CD8-positive, alpha-beta T cell (primary cell): ENCODE measurements at regions of chr17 and their contacts with region 1.

Region 1: DNA sequence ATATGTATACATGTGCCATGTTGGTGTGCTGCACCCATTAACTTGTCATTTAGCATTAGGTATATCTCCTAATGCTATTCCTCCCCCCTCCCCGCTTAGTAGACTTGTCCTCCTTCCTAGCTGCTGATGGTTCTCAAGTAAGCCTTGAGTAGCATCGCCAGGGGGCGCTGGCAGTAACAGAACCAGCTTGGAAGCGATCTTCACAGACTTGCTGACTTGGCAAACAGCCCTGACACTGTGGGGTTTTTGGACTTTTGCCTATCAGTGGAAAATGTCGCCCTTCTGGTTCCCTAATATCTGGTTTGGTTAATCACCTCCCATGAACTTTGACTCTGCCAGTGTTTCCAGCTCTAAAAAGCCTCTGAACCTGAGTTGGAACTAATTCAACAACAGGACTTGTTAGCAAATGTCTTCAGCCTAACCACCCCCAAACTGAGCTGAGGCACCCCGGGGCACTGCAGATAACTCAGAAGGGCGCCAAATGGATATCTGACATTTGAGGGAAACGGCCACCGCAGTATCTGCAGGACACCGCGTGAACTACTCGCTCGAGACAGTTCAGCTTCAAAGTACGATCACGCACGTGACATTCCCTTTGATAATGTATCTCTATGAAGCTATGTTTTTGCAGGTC is 15.4 kb upstream of the SPATA32 start:
- DNase-seq: peak; percentile 78 to 93 (median 91)
- ATAC-seq: peak; percentile 99
- H3K4me3 ChIP-seq: no peak overlapping the region
- H3K4me3 Mint-ChIP-seq: no peak overlapping the region
- H3K27ac ChIP-seq: no peak overlapping the region
- H3K27ac Mint-ChIP-seq: peak overlapping the region; percentile 41
- H3K4me1 ChIP-seq: no peaks in the 10 kb centered on the region
- H3K4me1 Mint-ChIP-seq: peaks cover 7% of the 10 kb centered on the region
- H3K27me3 ChIP-seq: no peaks in the 10 kb centered on the region
- H3K27me3 Mint-ChIP-seq: no peaks in the 10 kb centered on the region
- CTCF ChIP-seq: peak; percentile 73

Region 2: DNA sequence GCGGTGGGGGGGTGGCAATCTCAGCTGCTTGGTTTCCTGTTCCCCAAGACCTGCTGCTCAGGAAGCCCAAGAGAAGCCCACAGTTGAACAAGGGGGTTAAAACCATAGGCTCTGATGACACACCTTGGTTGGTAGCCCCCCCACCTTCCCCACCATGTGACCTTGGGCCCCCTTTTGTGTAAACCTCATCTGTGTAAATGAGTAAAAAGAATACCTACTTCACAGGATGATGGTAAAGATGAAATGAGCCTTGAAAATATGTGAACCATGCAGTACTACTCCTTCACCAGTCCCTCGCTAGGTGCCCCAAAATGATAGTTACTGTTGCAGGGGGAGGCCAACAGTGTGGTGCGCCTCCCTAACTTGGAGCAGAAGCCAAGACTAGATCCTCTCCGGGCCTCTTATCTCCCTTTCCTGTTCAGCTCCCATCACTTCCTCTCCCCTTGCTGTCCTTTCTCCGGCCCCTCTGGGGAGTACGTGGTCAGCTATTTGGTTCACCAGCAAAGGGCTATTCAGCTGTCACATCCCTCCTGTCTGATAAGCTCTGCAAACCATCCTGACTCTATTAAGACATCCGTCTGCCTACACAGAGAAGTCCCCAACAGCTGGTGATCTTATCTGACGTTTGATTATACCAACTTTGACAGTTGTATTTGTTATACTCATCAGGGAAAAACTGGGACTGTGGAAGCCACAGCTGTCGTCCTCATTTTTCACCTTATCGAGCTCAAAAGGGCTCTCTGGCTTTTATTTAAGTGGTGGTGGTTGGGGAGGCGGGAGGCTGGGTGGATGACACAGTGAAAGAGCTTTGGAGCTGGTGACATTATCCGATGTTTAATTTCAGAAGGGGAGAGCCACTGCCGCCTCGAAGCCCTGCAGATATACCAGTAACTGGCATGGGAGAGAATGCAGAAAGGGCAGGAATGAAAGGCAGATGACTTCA is 245.8 kb before region 1 on chr17:
- CTCF ChIA-PET with region 1: no interaction called
- POLR2A ChIA-PET with region 1: no interaction called
- intact Hi-C with region 1: no loop called
- DNase-seq: no peak
- ATAC-seq: no peak
- H3K4me3 ChIP-seq: no peak overlapping the region
- H3K4me3 Mint-ChIP-seq: no peak overlapping the region
- H3K27ac ChIP-seq: no peak overlapping the region
- H3K27ac Mint-ChIP-seq: no peak overlapping the region
- H3K4me1 ChIP-seq: no peaks in the 10 kb centered on the region
- H3K4me1 Mint-ChIP-seq: peaks cover 2% of the 10 kb centered on the region
- H3K27me3 ChIP-seq: no peaks in the 10 kb centered on the region
- H3K27me3 Mint-ChIP-seq: no peaks in the 10 kb centered on the region
- CTCF ChIP-seq: no peak

Region 3: GRCh38 chr17:45228763-45229539 is 48.4 kb before region 1 on chr17:
- CTCF ChIA-PET with region 1: interaction called, 206 read pairs
- POLR2A ChIA-PET with region 1: interaction called, 3 read pairs
- intact Hi-C with region 1: no loop called
- DNase-seq: peak; percentile 60 to 95 (median 83)
- ATAC-seq: peak; percentile 50
- H3K4me3 ChIP-seq: peak overlapping the region; percentile 84 to 97
- H3K4me3 Mint-ChIP-seq: peak overlapping the region; percentile 100
- H3K27ac ChIP-seq: peak overlapping the region; percentile 97
- H3K27ac Mint-ChIP-seq: peak overlapping the region; percentile 100
- H3K4me1 ChIP-seq: peaks cover 93% of the 10 kb centered on the region
- H3K4me1 Mint-ChIP-seq: peaks cover 82% of the 10 kb centered on the region
- H3K27me3 ChIP-seq: no peaks in the 10 kb centered on the region
- H3K27me3 Mint-ChIP-seq: no peaks in the 10 kb centered on the region
- CTCF ChIP-seq: no peak

Region 4: DNA sequence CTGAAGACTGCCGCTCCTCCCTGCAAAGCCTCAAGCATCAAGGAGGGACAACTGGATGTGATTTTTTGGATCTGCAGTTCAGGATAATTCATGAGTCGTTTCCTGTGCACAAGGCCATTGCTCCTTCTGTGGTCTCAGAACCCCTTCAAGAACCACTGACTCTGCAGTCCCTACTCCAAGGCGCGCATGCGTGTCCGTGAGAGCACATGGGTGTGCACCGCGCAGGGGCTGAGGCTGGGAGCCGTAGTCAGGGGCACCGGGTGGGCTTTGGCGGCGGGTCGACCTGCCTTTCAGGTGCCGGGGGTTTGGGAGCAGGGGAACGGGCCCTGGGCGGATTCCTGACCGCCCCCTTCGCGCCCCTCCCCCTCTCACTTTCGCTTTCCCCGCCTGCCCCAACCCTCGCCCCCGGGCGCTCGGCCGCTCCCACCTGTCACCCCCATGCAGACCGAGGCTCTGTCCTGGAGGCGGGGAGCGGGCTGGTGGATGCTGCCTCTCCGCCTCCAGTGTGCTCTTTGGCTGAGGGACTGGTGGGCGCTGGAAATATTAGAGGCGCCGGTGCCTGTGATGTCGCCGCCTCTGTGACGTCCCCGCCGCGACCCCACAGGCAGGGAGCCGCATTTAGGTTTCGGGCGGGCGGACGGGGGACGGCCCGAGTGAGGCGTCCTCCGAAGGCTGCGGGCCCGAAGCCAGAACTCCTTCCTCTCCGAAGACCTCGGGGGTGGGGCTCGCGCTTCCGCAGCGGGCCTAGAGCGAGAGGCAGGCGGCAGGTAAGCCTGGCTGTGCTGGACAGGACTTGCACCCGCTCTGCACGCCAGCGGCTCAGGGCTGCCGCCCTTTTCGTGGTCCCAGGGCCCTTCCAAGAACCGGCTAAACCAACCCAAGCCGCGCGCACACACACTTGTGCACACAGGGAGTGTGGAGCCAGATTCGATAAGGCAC is 15.5 kb before region 1 on chr17 and contains the start of gene SPATA32:
- CTCF ChIA-PET with region 1: interaction called, 32 read pairs
- POLR2A ChIA-PET with region 1: interaction called, 6 read pairs
- intact Hi-C with region 1: no loop called
- DNase-seq: peak; percentile 37 to 85 (median 75)
- ATAC-seq: peak; percentile 86
- H3K4me3 ChIP-seq: peak within 1 kb of the TSS; percentile 71 to 76
- H3K4me3 Mint-ChIP-seq: peak within 1 kb of the TSS; percentile 83
- H3K27ac ChIP-seq: peak within 1 kb of the TSS; percentile 29 to 74
- H3K27ac Mint-ChIP-seq: peak within 1 kb of the TSS; percentile 87
- H3K4me1 ChIP-seq: peaks cover 32% of the 10 kb centered on the region
- H3K4me1 Mint-ChIP-seq: peaks cover 29% of the 10 kb centered on the region
- H3K27me3 ChIP-seq: no peaks in the 10 kb centered on the region
- H3K27me3 Mint-ChIP-seq: no peaks in the 10 kb centered on the region
- CTCF ChIP-seq: no peak
- total RNA-seq, gene SPATA32: 0.22 TPM in 1 of 2 experiments, not detected in the other

Region 5: GRCh38 chr17:45307290-45308015 is 30.1 kb after region 1 on chr17:
- CTCF ChIA-PET with region 1: interaction called, 104 read pairs
- POLR2A ChIA-PET with region 1: interaction called, 11 read pairs
- intact Hi-C with region 1: no loop called
- DNase-seq: peak in 4 of 9 experiments; percentile 36 to 65 (median 42)
- ATAC-seq: peak; percentile 55
- H3K4me3 ChIP-seq: no peak overlapping the region
- H3K4me3 Mint-ChIP-seq: peak overlapping the region; percentile 42
- H3K27ac ChIP-seq: peak overlapping the region; percentile 32 to 33
- H3K27ac Mint-ChIP-seq: peak overlapping the region; percentile 81
- H3K4me1 ChIP-seq: peaks cover 62% of the 10 kb centered on the region
- H3K4me1 Mint-ChIP-seq: peaks cover 77% of the 10 kb centered on the region
- H3K27me3 ChIP-seq: no peaks in the 10 kb centered on the region
- H3K27me3 Mint-ChIP-seq: no peaks in the 10 kb centered on the region
- CTCF ChIP-seq: no peak

Region 6: GRCh38 chr17:45364531-45365390 is 87.4 kb after region 1 on chr17:
- CTCF ChIA-PET with region 1: interaction called, 13 read pairs
- POLR2A ChIA-PET with region 1: interaction called, 3 read pairs
- intact Hi-C with region 1: no loop called
- DNase-seq: no peak
- ATAC-seq: no peak
- H3K4me3 ChIP-seq: no peak overlapping the region
- H3K4me3 Mint-ChIP-seq: no peak overlapping the region
- H3K27ac ChIP-seq: no peak overlapping the region
- H3K27ac Mint-ChIP-seq: no peak overlapping the region
- H3K4me1 ChIP-seq: no peaks in the 10 kb centered on the region
- H3K4me1 Mint-ChIP-seq: no peaks in the 10 kb centered on the region
- H3K27me3 ChIP-seq: no peaks in the 10 kb centered on the region
- H3K27me3 Mint-ChIP-seq: peaks cover 18% of the 10 kb centered on the region
- CTCF ChIP-seq: no peak

Region 7: DNA sequence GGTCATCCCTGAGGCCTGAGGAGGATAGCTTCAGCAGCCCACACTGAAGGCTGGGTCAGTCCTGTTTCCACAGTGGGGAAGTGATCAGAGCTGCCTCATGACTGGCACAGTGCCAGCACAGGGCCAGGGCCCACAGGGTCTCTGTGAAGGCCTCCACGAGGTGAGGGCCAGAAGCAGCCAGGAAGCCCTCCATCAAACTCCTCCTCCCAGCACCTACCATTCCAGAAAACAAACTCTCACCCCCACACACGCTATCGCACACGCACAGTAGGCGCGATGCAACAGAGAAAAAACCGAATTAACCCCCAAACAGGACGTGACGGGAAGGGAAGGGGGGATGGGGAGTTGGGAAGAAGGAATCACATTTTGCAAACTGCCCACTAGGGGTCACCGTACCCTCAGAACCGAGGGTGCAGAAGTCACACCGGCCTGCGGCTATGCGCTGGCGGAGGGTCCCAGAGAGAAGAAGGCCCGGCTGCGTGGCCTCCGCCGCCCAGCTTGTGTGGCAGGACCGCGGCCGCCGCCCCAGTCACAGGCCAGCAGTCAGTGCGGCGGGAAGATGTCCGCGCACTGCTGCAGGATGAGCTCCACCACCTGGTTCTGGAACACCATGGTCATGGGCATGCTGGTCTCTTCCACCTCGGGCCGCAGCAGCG is 117.7 kb after region 1 on chr17:
- CTCF ChIA-PET with region 1: interaction called, 279 read pairs
- POLR2A ChIA-PET with region 1: interaction called, 4 read pairs
- intact Hi-C with region 1: no loop called
- DNase-seq: peak in 6 of 9 experiments; percentile 26 to 73 (median 56)
- ATAC-seq: peak; percentile 57
- H3K4me3 ChIP-seq: no peak overlapping the region
- H3K4me3 Mint-ChIP-seq: no peak overlapping the region
- H3K27ac ChIP-seq: peak overlapping the region in 1 of 2 experiments; percentile 25
- H3K27ac Mint-ChIP-seq: peak overlapping the region; percentile 72
- H3K4me1 ChIP-seq: no peaks in the 10 kb centered on the region
- H3K4me1 Mint-ChIP-seq: peaks cover 2% of the 10 kb centered on the region
- H3K27me3 ChIP-seq: no peaks in the 10 kb centered on the region
- H3K27me3 Mint-ChIP-seq: no peaks in the 10 kb centered on the region
- CTCF ChIP-seq: peak; percentile 51

Region 8: GRCh38 chr17:45573924-45574770 is 296.8 kb after region 1 on chr17:
- CTCF ChIA-PET with region 1: no interaction called
- POLR2A ChIA-PET with region 1: no interaction called
- intact Hi-C with region 1: no loop called
- DNase-seq: no peak
- ATAC-seq: no peak
- H3K4me3 ChIP-seq: no peak overlapping the region
- H3K4me3 Mint-ChIP-seq: no peak overlapping the region
- H3K27ac ChIP-seq: no peak overlapping the region
- H3K27ac Mint-ChIP-seq: no peak overlapping the region
- H3K4me1 ChIP-seq: peaks cover 4% of the 10 kb centered on the region
- H3K4me1 Mint-ChIP-seq: peaks cover 21% of the 10 kb centered on the region
- H3K27me3 ChIP-seq: no peaks in the 10 kb centered on the region
- H3K27me3 Mint-ChIP-seq: no peaks in the 10 kb centered on the region
- CTCF ChIP-seq: no peak